Sigmoid colon (tissue), 7 donors: ENCODE measurements at regions of chr1 and their contacts with region 1.

Region 1: DNA sequence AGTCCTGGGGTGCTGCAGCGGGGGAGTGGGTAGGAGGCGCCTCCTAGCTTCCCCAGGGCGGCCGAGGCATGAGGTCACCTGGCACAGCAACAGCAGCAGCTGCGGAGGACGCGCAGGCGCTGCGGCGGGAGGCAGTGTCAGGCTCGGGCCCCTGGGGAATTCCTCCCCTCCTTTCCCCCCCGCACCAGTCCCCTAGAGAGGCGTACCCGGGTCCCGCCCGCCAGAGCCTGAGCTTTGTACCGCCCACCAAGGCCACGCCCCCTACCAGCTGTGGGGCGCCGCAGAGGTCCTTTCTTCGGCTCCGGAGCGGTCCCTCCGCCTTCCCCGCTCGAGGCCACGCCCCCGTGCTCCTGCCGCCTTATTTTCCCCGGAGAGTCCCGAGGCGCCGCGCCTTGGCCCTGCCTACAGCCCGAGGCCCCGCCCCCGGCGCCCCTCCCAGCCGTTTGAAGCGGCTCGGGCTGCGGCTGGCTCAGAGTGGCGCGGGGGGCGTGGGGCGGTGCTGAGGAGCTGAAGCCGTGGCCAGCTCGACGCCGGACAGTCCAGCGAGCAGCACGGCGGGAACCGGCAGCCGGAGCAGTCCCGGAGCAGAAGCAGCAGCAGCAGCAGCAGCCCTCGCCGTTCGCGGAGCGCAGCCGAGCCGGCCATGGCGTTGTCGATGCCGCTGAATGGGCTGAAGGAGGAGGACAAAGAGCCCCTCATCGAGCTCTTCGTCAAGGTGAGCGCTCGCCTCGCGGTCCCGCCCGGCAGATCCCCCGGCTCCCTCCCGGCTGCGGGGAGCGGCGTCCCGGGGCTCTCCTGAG is at the start of gene CLIC4:
- DNase-seq: peak; percentile 100
- H3K4me3 ChIP-seq: peak within 1 kb of the TSS; percentile 89 to 97 (median 94)
- H3K27ac ChIP-seq: peak within 1 kb of the TSS; percentile 95 to 100 (median 99)
- H3K4me1 ChIP-seq: peaks cover 0 to 49% (median 47%) of the 10 kb centered on the region in 4 donors
- H3K27me3 ChIP-seq: no peaks in the 10 kb centered on the region
- CTCF ChIP-seq: no peak
- EP300 ChIP-seq: peak in 2 of 4 donors; percentile 15 to 47
- POLR2A ChIP-seq: peak; percentile 97
- total RNA-seq, gene CLIC4: 334 to 443 (median 385) TPM

Region 2: GRCh38 chr1:24694380-24694843 is 50.7 kb before region 1 on chr1:
- intact Hi-C with region 1: loop called (anchors 5 kb)
- DNase-seq: peak; percentile 71
- H3K4me3 ChIP-seq: no peak overlapping the region
- H3K27ac ChIP-seq: peak overlapping the region in 2 of 4 donors; percentile 43 to 59
- H3K4me1 ChIP-seq: peaks cover 0 to 15% (median 13%) of the 10 kb centered on the region in 4 donors
- H3K27me3 ChIP-seq: no peaks in the 10 kb centered on the region
- CTCF ChIP-seq: no peak
- EP300 ChIP-seq: peak in 1 of 4 donors; percentile 37
- POLR2A ChIP-seq: no peak

Region 3: GRCh38 chr1:24769656-24770651 is 24.8 kb after region 1 on chr1:
- intact Hi-C with region 1: loop called (anchors 2 kb)
- DNase-seq: no peak
- H3K4me3 ChIP-seq: peak overlapping the region in 2 of 4 donors; percentile 12 to 15
- H3K27ac ChIP-seq: peak overlapping the region; percentile 83 to 94 (median 89)
- H3K4me1 ChIP-seq: peaks cover 0 to 47% (median 45%) of the 10 kb centered on the region in 4 donors
- H3K27me3 ChIP-seq: no peaks in the 10 kb centered on the region
- CTCF ChIP-seq: no peak
- EP300 ChIP-seq: peak in 2 of 4 donors; percentile 53 to 71
- POLR2A ChIP-seq: no peak

Region 4: GRCh38 chr1:24805534-24806301 is 60.6 kb after region 1 on chr1:
- intact Hi-C with region 1: no loop called
- DNase-seq: no peak
- H3K4me3 ChIP-seq: no peak overlapping the region
- H3K27ac ChIP-seq: peak overlapping the region in 3 of 4 donors; percentile 29 to 43 (median 32)
- H3K4me1 ChIP-seq: peaks cover 0 to 50% (median 39%) of the 10 kb centered on the region in 4 donors
- H3K27me3 ChIP-seq: no peaks in the 10 kb centered on the region
- CTCF ChIP-seq: no peak
- EP300 ChIP-seq: no peak
- POLR2A ChIP-seq: no peak

Region 5: GRCh38 chr1:24830680-24831272 is 85.7 kb after region 1 on chr1:
- intact Hi-C with region 1: loop called (anchors 2 kb)
- DNase-seq: no peak
- H3K4me3 ChIP-seq: no peak overlapping the region
- H3K27ac ChIP-seq: peak overlapping the region in 2 of 4 donors; percentile 6 to 32
- H3K4me1 ChIP-seq: peaks cover 0 to 59% (median 48%) of the 10 kb centered on the region in 4 donors
- H3K27me3 ChIP-seq: no peaks in the 10 kb centered on the region
- CTCF ChIP-seq: peak; percentile 58 to 85 (median 68)
- EP300 ChIP-seq: no peak
- POLR2A ChIP-seq: no peak

Region 6: GRCh38 chr1:24909388-24909898 is 164.3 kb after region 1 on chr1:
- intact Hi-C with region 1: no loop called
- DNase-seq: no peak
- H3K4me3 ChIP-seq: no peak overlapping the region
- H3K27ac ChIP-seq: no peak overlapping the region
- H3K4me1 ChIP-seq: peaks cover 0 to 6% (median 6%) of the 10 kb centered on the region in 4 donors
- H3K27me3 ChIP-seq: no peaks in the 10 kb centered on the region
- CTCF ChIP-seq: peak in 3 of 4 experiments; percentile 23 to 35 (median 24)
- EP300 ChIP-seq: no peak
- POLR2A ChIP-seq: no peak